Endothelial cell of umbilical vein (primary cell): ENCODE measurements at regions of chr2 and their contacts with region 1.

Region 1: DNA sequence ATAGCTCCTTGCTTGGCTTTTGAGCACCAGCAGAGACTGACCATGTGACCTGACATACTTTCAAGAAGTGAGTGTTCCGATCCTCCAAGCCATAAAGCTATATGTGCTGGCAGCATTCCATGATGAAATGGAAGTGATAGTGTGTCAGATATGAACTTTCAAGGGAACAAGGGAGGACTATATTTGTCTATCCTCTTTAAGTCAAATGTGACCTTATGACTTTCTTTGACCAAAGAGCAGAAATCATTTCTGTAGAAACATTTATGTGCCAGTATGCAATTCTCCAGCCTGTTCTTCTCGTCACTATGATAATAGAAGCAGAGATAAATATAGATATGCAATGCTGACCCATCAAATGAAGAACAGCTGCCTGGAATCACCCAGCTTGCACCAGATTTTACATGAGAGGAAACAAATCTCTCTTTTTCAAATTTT is 14.4 kb downstream of the HYCC2 start:
- DNase-seq: no peak
- H3K4me3 ChIP-seq: no peak overlapping the region
- H3K27ac ChIP-seq: no peak overlapping the region
- H3K4me1 ChIP-seq: peaks cover 5% of the 10 kb centered on the region
- H3K27me3 ChIP-seq: no peaks in the 10 kb centered on the region
- CTCF ChIP-seq: no peak
- POLR2A ChIP-seq: no peak

Region 2: DNA sequence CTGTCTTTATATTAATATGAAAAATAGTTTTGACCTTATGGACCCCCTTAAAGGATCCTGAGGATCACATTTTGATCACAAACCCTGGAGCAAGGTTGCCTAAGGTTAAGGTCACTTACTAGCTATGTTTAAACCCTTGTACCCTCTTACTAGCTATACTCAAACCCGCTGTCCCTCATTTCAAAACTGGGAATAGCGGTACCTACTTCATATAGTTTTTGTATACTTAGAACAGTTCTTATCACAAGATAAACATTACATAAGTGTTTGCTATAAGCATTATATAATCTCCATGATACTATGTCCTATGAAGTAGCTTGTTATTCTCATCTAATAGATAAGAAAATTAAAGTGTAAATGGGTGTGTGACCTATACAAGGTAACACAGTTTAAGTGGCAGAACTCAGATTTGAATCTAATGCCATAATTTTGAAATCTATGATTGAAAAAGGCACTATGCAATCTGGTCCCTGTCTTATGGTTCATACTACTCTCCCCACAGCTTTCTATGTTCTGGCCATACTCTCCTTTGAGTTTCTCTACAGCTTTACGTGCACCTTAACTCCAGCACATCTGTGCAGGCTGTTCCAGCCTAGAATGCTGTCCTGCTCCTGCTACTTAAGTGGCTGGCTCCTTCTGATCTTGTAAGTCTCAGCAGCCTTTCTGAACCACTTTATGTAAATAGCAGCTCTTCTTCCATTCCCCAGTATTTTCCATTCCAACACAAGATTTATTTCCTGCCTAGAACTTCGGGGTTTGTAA is 16.1 kb before region 1 on chr2:
- CTCF ChIA-PET with region 1: interaction called, 11 read pairs
- POLR2A ChIA-PET with region 1: no interaction called
- dilution Hi-C with region 1: no loop called
- intact Hi-C with region 1: no loop called
- DNase-seq: no peak
- H3K4me3 ChIP-seq: no peak overlapping the region
- H3K27ac ChIP-seq: no peak overlapping the region
- H3K4me1 ChIP-seq: no peaks in the 10 kb centered on the region
- H3K27me3 ChIP-seq: no peaks in the 10 kb centered on the region
- CTCF ChIP-seq: no peak
- POLR2A ChIP-seq: no peak

Region 3: GRCh38 chr2:201558665-201559064 is 501.6 kb after region 1 on chr2:
- CTCF ChIA-PET with region 1: no interaction called
- POLR2A ChIA-PET with region 1: no interaction called
- dilution Hi-C with region 1: no loop called
- intact Hi-C with region 1: no loop called
- DNase-seq: no peak
- H3K4me3 ChIP-seq: no peak overlapping the region
- H3K27ac ChIP-seq: no peak overlapping the region
- H3K4me1 ChIP-seq: no peaks in the 10 kb centered on the region
- H3K27me3 ChIP-seq: no peaks in the 10 kb centered on the region
- CTCF ChIP-seq: no peak
- POLR2A ChIP-seq: no peak